Tibial artery (tissue), 4 donors: ENCODE measurements at regions of chr15 and their contacts with region 1.

Region 1: DNA sequence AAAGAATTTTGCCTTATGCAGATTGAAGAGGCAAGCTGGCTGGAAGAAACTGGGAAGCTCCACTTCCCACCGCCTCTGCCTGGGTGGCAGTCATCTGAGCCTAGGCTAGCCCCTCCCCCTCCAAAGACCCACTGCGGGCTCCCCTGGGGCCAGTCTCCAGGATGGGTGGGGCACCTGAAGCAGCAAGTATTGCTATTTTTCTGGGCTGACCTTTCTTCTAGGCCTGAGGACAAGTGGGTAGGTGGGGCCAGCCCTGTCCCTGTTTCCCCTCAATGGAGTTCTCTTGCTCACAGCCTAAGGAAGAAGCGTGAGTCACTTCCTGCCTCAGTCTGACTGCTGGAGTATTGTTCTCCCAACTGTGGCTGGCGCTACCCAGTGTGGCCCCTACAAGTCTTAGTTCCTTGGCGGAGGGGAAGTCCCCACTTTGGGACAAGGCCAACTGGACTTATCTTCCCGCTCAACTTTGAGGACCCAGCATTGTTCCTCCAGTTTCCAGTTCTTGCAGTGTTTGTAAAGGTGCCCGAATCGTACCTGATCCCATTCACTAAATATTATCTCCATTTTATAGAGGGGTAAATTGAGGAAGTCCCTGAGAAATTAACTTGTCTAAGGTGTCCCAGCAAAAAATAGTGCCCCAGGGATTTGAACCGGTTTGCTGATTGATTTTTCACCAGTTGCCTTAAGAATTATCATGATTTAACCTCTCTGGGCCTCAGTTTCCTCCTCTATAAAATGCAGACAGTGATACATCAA is 1.4 kb downstream of the FURIN start:
- DNase-seq: peak; percentile 85 to 90
- H3K4me3 ChIP-seq: peak overlapping the region in 1 of 2 donors; percentile 87
- H3K27ac ChIP-seq: peak overlapping the region; percentile 97 to 98
- H3K4me1 ChIP-seq: peaks cover 0 to 45% (median 41%) of the 10 kb centered on the region in 4 donors
- H3K27me3 ChIP-seq: no peaks in the 10 kb centered on the region
- CTCF ChIP-seq: no peak

Region 2: DNA sequence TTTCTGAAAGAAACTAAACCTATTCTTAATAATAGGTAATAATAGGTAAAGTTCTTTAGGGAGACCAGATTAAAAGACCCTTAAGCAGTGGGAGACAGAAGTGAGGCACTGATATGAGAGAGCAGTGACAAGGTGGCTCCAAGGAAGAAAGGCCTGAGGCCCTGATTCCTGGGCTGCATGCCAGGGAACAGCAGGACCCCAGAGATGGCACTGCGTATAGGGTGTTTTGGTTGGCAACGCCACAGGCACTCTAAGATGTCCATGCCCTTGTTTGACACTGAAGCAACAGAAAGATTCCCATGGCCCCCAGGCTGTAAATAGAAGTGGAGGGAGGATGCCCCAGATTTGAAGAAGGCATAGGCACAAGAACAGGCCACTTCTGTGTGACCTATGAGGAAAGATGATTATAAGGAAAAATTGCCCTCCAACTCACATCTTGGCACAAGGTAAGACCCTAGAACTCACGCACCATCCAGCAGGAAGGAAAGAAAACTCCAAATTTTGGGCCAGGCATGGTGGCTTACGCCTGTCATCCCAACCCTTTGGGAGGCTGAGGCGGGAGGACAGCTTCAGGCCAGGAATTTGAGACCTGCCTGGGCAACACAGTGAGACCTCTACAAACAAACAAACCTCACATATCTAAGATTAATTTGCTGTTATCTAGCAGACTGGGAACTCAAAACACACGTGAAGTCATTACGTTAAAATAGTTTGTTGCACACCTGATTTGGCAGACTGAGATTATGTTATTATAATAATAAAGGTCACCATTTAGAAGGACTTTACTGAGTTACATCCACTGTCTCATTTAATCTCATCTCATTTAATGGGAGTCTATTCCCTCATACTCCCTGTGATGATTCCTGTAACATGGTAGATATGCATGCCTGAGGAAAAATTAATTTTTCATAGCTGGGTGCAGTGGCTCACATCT is 163.1 kb before region 1 on chr15:
- intact Hi-C with region 1: no loop called
- DNase-seq: no peak
- H3K4me3 ChIP-seq: no peak overlapping the region
- H3K27ac ChIP-seq: no peak overlapping the region
- H3K4me1 ChIP-seq: no peaks in the 10 kb centered on the region
- H3K27me3 ChIP-seq: no peaks in the 10 kb centered on the region
- CTCF ChIP-seq: no peak

Region 3: GRCh38 chr15:90716976-90717821 is 152.6 kb before region 1 on chr15 and contains the start of gene BLM:
- intact Hi-C with region 1: loop called (anchors 5 kb)
- DNase-seq: peak; percentile 95 to 98
- H3K4me3 ChIP-seq: peak within 1 kb of the TSS; percentile 58 to 78
- H3K27ac ChIP-seq: peak within 1 kb of the TSS; percentile 88 to 91
- H3K4me1 ChIP-seq: peaks cover 6 to 13% (median 10%) of the 10 kb centered on the region in 4 donors
- H3K27me3 ChIP-seq: no peaks in the 10 kb centered on the region
- CTCF ChIP-seq: peak; percentile 54 to 58

Region 4: DNA sequence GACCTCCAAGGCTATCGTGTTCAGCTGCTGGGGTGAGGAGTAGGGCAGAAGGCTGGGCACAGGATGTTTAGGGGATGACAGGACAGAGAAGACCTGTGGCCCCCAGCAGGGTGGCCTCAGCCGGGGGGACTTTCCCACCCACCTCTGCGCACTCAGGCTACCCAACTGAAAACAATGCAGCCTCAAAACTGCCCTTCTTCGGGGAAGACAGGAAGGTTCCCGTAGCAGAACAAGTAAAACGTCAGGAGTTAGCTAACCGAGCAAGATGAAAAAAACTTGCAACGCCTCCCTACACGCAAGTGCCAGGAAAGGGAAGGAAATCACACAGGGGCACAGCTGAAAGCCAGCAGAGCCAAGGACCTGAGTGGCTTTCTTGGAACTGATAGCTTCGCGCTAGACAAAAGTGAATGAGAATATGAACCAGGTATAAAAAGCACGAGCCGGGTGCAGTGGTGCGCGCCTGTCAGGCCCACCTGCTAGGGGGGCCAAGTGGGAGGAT is 39.8 kb before region 1 on chr15:
- intact Hi-C with region 1: no loop called
- DNase-seq: peak in 1 of 2 donors; percentile 55
- H3K4me3 ChIP-seq: no peak overlapping the region
- H3K27ac ChIP-seq: peak overlapping the region in 1 of 2 donors; percentile 21
- H3K4me1 ChIP-seq: no peaks in the 10 kb centered on the region
- H3K27me3 ChIP-seq: peaks cover 0 to 4% of the 10 kb centered on the region in 2 donors
- CTCF ChIP-seq: no peak